ENCODE measurements at regions of chr14 and their contacts with region 1.

Region 1: DNA sequence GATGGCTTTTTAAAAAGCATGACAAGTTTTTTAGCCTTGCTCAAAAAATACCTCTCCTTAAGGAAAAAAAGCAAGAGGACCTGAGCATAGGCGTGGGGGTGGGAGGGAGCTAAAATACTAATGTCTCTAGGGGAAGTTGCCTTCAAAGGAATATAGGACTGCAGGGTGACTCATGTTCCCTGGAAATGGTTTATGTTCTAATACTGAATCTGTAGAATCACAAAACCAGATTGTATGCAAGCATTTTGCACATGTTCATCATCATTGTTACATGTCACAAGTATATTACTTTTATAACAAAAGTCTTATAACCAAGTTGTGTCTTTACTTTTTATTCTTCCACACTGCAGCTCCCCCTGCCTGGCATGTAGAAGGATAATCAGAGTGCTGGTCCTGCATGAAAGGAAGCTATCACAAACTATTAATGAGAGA is 36.6 kb downstream of the GPR135 start:
- DNase-seq: no peak
- H3K4me3 ChIP-seq: no peak overlapping the region
- H3K27ac ChIP-seq: no peak overlapping the region
- H3K4me1 ChIP-seq: peaks cover 11% of the 10 kb centered on the region
- H3K27me3 ChIP-seq: no peaks in the 10 kb centered on the region
- CTCF ChIP-seq: peak in 2 of 3 donors; percentile 31 to 41
- EP300 ChIP-seq: no peak
- POLR2A ChIP-seq: no peak

Region 2: GRCh38 chr14:59320763-59321640 is 107.6 kb before region 1 on chr14:
- intact Hi-C with region 1: loop called in 1 of 4 experiments (anchors 10 kb)
- DNase-seq: no peak
- H3K4me3 ChIP-seq: no peak overlapping the region
- H3K27ac ChIP-seq: no peak overlapping the region
- H3K4me1 ChIP-seq: peaks cover 5% of the 10 kb centered on the region
- H3K27me3 ChIP-seq: no peaks in the 10 kb centered on the region
- CTCF ChIP-seq: no peak
- EP300 ChIP-seq: no peak
- POLR2A ChIP-seq: no peak

Region 3: DNA sequence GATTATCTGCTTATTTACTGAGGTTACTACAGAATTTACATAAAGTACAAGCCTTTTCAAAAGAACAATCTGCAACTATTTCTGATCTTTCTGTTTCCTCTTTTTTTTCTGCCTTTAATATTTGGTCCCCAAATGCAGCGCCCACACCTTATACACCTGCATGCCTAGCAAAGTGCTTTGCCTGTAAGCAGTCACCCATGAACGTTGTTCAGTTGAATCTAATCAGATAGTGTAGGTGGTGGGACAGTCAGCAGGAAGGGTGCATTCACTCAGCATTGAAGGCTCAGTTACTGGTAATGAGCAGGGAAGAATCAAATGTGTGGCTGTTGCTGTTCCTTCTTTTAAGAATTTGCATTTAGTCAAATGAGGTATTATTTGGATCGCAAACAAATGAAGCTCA is 71.8 kb before region 1 on chr14:
- intact Hi-C with region 1: loop called in 1 of 4 experiments (anchors 2 kb)
- DNase-seq: no peak
- H3K4me3 ChIP-seq: no peak overlapping the region
- H3K27ac ChIP-seq: no peak overlapping the region
- H3K4me1 ChIP-seq: peaks cover 9% of the 10 kb centered on the region
- H3K27me3 ChIP-seq: no peaks in the 10 kb centered on the region
- CTCF ChIP-seq: no peak
- EP300 ChIP-seq: no peak
- POLR2A ChIP-seq: no peak